ENCODE measurements at regions of chr7 and their contacts with region 1.

Region 1: DNA sequence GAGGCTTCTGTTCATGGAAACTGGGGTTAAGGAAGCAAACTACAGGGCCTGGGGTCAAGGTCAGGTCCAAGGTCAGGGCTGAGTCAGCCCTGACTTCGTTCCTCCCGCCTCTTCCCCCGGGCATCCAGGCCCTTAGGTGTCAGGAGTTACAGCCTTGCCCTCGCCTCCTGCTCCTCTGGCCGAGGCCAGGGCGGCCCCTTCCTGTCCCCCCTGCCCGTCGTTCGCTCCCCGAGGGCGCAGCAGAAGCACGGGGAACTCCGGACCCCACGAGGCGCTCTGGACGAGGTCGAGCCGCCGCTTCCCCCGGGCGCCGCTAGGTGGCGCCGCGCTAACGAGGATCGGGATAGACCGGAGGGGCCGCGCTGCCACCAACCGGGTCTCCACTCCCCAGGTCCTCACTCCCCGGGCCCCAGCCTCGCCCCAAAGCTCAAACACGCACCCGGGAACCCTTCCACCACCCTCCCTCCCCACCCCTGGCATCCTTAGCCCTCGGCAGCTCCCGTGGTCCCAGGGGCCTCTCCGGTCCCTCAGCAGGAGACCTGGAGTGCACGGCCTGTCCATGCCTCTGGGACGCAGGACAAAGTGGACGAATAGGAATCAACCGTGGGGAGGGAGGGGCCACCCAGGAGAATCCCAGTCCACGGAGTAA is 59.2 kb upstream of the MYL10 start:
- DNase-seq: peak in 1 of 2 experiments; percentile 79
- H3K4me3 ChIP-seq: peak overlapping the region; percentile 38; the same call in 1 of the 2 replicates
- H3K27ac ChIP-seq: no peak overlapping the region
- H3K4me1 ChIP-seq: peaks cover 4% of the 10 kb centered on the region
- H3K27me3 ChIP-seq: no peaks in the 10 kb centered on the region
- CTCF ChIP-seq: peak; percentile 96

Region 2: GRCh38 chr7:101542527-101543241 is 145.6 kb before region 1 on chr7:
- CTCF ChIA-PET with region 1: no interaction called
- POLR2A ChIA-PET with region 1: no interaction called
- intact Hi-C with region 1: loop called (anchors 2 kb)
- DNase-seq: peak in 1 of 2 experiments; percentile 77
- H3K4me3 ChIP-seq: no peak overlapping the region
- H3K27ac ChIP-seq: no peak overlapping the region
- H3K4me1 ChIP-seq: no peaks in the 10 kb centered on the region
- H3K27me3 ChIP-seq: no peaks in the 10 kb centered on the region
- CTCF ChIP-seq: peak; percentile 98

Region 3: GRCh38 chr7:101743241-101743994 is 55.1 kb after region 1 on chr7:
- CTCF ChIA-PET with region 1: no interaction called
- POLR2A ChIA-PET with region 1: no interaction called
- intact Hi-C with region 1: loop called (anchors 1 kb)
- DNase-seq: peak; percentile 52 to 66
- H3K4me3 ChIP-seq: peak overlapping the region; percentile 63
- H3K27ac ChIP-seq: no peak overlapping the region
- H3K4me1 ChIP-seq: peaks cover 28% of the 10 kb centered on the region
- H3K27me3 ChIP-seq: no peaks in the 10 kb centered on the region
- CTCF ChIP-seq: peak; percentile 51

Region 4: GRCh38 chr7:101754424-101755159 is 66.3 kb after region 1 on chr7:
- CTCF ChIA-PET with region 1: no interaction called
- POLR2A ChIA-PET with region 1: no interaction called
- intact Hi-C with region 1: no loop called
- DNase-seq: no peak
- H3K4me3 ChIP-seq: peak overlapping the region; percentile 26; the same call in 1 of the 2 replicates
- H3K27ac ChIP-seq: no peak overlapping the region
- H3K4me1 ChIP-seq: no peaks in the 10 kb centered on the region
- H3K27me3 ChIP-seq: no peaks in the 10 kb centered on the region
- CTCF ChIP-seq: no peak

Region 5: GRCh38 chr7:101772513-101773211 is 84.4 kb after region 1 on chr7:
- CTCF ChIA-PET with region 1: interaction called, 19 read pairs
- POLR2A ChIA-PET with region 1: no interaction called
- intact Hi-C with region 1: no loop called
- DNase-seq: no peak
- H3K4me3 ChIP-seq: no peak overlapping the region
- H3K27ac ChIP-seq: no peak overlapping the region
- H3K4me1 ChIP-seq: no peaks in the 10 kb centered on the region
- H3K27me3 ChIP-seq: peaks cover 23% of the 10 kb centered on the region; the same call in 1 of the 2 replicates
- CTCF ChIP-seq: no peak

Region 6: GRCh38 chr7:102236592-102237287 is 548.4 kb after region 1 on chr7:
- CTCF ChIA-PET with region 1: no interaction called
- POLR2A ChIA-PET with region 1: no interaction called
- intact Hi-C with region 1: loop called (anchors 2 kb)
- DNase-seq: peak in 1 of 2 experiments; percentile 71
- H3K4me3 ChIP-seq: no peak overlapping the region
- H3K27ac ChIP-seq: no peak overlapping the region
- H3K4me1 ChIP-seq: no peaks in the 10 kb centered on the region
- H3K27me3 ChIP-seq: no peaks in the 10 kb centered on the region
- CTCF ChIP-seq: peak; percentile 90

Region 7: GRCh38 chr7:102272075-102272917 is 584.0 kb after region 1 on chr7:
- CTCF ChIA-PET with region 1: interaction called, 10 read pairs
- POLR2A ChIA-PET with region 1: no interaction called
- intact Hi-C with region 1: loop called (anchors 2 kb)
- DNase-seq: peak in 1 of 2 experiments; percentile 86
- H3K4me3 ChIP-seq: no peak overlapping the region
- H3K27ac ChIP-seq: no peak overlapping the region
- H3K4me1 ChIP-seq: no peaks in the 10 kb centered on the region
- H3K27me3 ChIP-seq: no peaks in the 10 kb centered on the region
- CTCF ChIP-seq: peak; percentile 86